Transverse colon (tissue), 4 donors: ENCODE measurements at regions of chr3 and their contacts with region 1.

Region 1: GRCh38 chr3:150495563-150496168 is 50.6 kb downstream of the SERP1 start:
- DNase-seq: no peak
- H3K4me3 ChIP-seq: no peak overlapping the region
- H3K27ac ChIP-seq: no peak overlapping the region
- H3K4me1 ChIP-seq: peaks cover 0 to 5% (median 0%) of the 10 kb centered on the region in 4 donors
- H3K27me3 ChIP-seq: no peaks in the 10 kb centered on the region
- CTCF ChIP-seq: peak; percentile 75 to 92 (median 86)
- EP300 ChIP-seq: no peak
- POLR2A ChIP-seq: no peak

Region 2: GRCh38 chr3:149969940-149970715 is 525.5 kb before region 1 on chr3:
- in situ Hi-C with region 1: loop called in 3 of 4 experiments (anchors 25 kb)
- intact Hi-C with region 1: no loop called
- DNase-seq: peak; percentile 92
- H3K4me3 ChIP-seq: peak overlapping the region; percentile 48 to 98 (median 92)
- H3K27ac ChIP-seq: peak overlapping the region; percentile 89 to 98 (median 94)
- H3K4me1 ChIP-seq: peaks cover 0 to 33% (median 22%) of the 10 kb centered on the region in 4 donors
- H3K27me3 ChIP-seq: peaks cover 3% of the 10 kb centered on the region
- CTCF ChIP-seq: no peak
- EP300 ChIP-seq: no peak
- POLR2A ChIP-seq: peak; percentile 7

Region 3: GRCh38 chr3:150227839-150228238 is 267.8 kb before region 1 on chr3:
- in situ Hi-C with region 1: loop called in 3 of 4 experiments (anchors 10 kb)
- intact Hi-C with region 1: no loop called
- DNase-seq: peak; percentile 64
- H3K4me3 ChIP-seq: no peak overlapping the region
- H3K27ac ChIP-seq: no peak overlapping the region
- H3K4me1 ChIP-seq: no peaks in the 10 kb centered on the region
- H3K27me3 ChIP-seq: no peaks in the 10 kb centered on the region
- CTCF ChIP-seq: peak; percentile 59 to 74 (median 65)
- EP300 ChIP-seq: no peak
- POLR2A ChIP-seq: no peak

Region 4: DNA sequence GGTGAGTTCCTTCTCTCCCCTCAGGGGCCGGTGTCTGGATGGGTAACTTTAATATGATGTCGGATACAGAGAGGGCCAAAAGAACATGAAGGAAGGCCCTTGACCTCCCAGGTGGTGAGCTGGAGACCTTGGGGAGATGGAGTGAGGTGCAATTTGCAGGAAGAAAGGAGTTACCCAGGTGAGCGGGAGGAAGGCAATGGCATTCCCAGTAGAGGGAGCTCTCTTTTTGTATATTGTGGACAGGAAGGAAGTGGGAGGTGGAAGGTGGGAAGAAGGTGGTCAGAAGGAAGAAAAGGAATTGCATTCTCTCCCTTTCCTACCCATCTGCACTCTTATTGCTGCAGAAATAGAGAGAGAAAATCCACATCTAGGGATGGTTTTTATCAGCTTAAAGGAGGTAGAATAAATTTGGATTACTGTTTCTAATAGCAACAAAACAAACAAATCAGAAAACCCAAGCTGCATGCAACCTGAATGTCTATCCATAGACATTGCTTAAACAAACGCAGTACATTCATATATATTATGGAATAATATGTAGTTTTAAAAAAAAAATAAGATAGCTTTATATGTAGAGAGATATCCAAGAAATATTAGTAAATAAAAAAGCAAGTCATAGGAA is 256.6 kb before region 1 on chr3:
- in situ Hi-C with region 1: loop called in 1 of 4 experiments (anchors 10 kb)
- intact Hi-C with region 1: no loop called
- DNase-seq: peak; percentile 38
- H3K4me3 ChIP-seq: no peak overlapping the region
- H3K27ac ChIP-seq: peak overlapping the region in 1 of 4 donors; percentile 73
- H3K4me1 ChIP-seq: peaks cover 8 to 45% (median 29%) of the 10 kb centered on the region in 4 donors
- H3K27me3 ChIP-seq: no peaks in the 10 kb centered on the region
- CTCF ChIP-seq: peak; percentile 31 to 66 (median 52)
- EP300 ChIP-seq: no peak
- POLR2A ChIP-seq: no peak

Region 5: GRCh38 chr3:150286390-150287147 is 209.1 kb before region 1 on chr3:
- in situ Hi-C with region 1: loop called in 2 of 4 experiments (anchors 5 to 10 kb)
- intact Hi-C with region 1: no loop called
- DNase-seq: no peak
- H3K4me3 ChIP-seq: no peak overlapping the region
- H3K27ac ChIP-seq: peak overlapping the region in 1 of 4 donors; percentile 33
- H3K4me1 ChIP-seq: peaks cover 0 to 5% (median 0%) of the 10 kb centered on the region in 4 donors
- H3K27me3 ChIP-seq: no peaks in the 10 kb centered on the region
- CTCF ChIP-seq: peak; percentile 57 to 81 (median 59)
- EP300 ChIP-seq: no peak
- POLR2A ChIP-seq: no peak

Region 6: DNA sequence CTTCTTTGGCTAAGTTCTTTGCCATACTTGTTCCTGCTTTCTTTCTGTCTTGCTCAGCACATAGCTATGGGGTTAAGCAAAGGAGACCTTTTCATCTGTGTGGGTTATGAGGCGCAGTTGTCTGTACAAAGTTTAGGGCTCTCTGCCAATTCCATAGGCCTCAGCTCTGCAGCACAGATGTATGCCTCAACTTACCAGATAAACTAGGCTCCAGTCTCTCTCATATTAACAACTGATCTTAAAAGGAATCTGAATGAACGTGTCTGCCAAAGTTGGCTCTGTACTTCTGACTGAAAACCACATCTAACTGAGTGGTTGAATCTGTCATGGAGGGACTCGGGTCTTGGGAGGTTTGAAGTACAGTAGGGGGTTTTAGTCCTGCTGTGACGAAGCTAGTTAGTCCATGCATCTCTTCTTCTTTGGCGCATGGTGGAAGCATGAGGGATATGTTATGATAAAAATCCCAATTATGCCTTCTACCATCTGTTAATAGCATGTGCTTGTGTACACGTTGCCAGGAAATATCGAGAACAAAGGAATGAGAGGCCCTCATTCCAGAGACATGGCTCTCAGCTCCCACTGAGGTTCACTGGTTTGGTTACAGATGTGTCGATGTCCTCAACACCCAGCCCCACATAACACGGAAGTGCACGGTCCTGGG is 202.1 kb before region 1 on chr3:
- in situ Hi-C with region 1: loop called in 2 of 4 experiments (anchors 5 to 10 kb)
- intact Hi-C with region 1: no loop called
- DNase-seq: no peak
- H3K4me3 ChIP-seq: no peak overlapping the region
- H3K27ac ChIP-seq: no peak overlapping the region
- H3K4me1 ChIP-seq: peaks cover 0 to 13% (median 0%) of the 10 kb centered on the region in 4 donors
- H3K27me3 ChIP-seq: no peaks in the 10 kb centered on the region
- CTCF ChIP-seq: no peak
- EP300 ChIP-seq: no peak
- POLR2A ChIP-seq: no peak

Region 7: GRCh38 chr3:150408221-150409102 is 87.2 kb before region 1 on chr3 and contains the start of gene TSC22D2:
- in situ Hi-C with region 1: no loop called
- intact Hi-C with region 1: loop called (anchors 1 kb)
- DNase-seq: peak; percentile 98
- H3K4me3 ChIP-seq: peak within 1 kb of the TSS; percentile 60 to 92 (median 86)
- H3K27ac ChIP-seq: peak within 1 kb of the TSS; percentile 98 to 100 (median 100)
- H3K4me1 ChIP-seq: peaks cover 8 to 23% (median 17%) of the 10 kb centered on the region in 4 donors
- H3K27me3 ChIP-seq: no peaks in the 10 kb centered on the region
- CTCF ChIP-seq: peak in 3 of 5 experiments; percentile 26 to 44 (median 40)
- EP300 ChIP-seq: no peak
- POLR2A ChIP-seq: peak; percentile 98
- total RNA-seq, gene TSC22D2: 19.8 to 59.7 (median 29.5) TPM

Region 8: GRCh38 chr3:150443331-150443741 is 52.3 kb before region 1 on chr3:
- in situ Hi-C with region 1: no loop called
- intact Hi-C with region 1: no loop called
- DNase-seq: no peak
- H3K4me3 ChIP-seq: no peak overlapping the region
- H3K27ac ChIP-seq: no peak overlapping the region
- H3K4me1 ChIP-seq: peaks cover 0 to 23% (median 1%) of the 10 kb centered on the region in 4 donors
- H3K27me3 ChIP-seq: no peaks in the 10 kb centered on the region
- CTCF ChIP-seq: no peak
- EP300 ChIP-seq: no peak
- POLR2A ChIP-seq: no peak